GM13977 (cell line): ENCODE measurements at regions of chr7 and their contacts with region 1.

Region 1: GRCh38 chr7:148962823-148963582 is 65.3 kb downstream of the PDIA4 start:
- DNase-seq: peak; percentile 71
- CTCF ChIP-seq: peak; percentile 89

Region 2: GRCh38 chr7:148262721-148263229 is 700.2 kb before region 1 on chr7:
- in situ Hi-C with region 1: loop called (anchors 10 kb)
- DNase-seq: peak; percentile 64
- CTCF ChIP-seq: peak; percentile 99

Region 3: DNA sequence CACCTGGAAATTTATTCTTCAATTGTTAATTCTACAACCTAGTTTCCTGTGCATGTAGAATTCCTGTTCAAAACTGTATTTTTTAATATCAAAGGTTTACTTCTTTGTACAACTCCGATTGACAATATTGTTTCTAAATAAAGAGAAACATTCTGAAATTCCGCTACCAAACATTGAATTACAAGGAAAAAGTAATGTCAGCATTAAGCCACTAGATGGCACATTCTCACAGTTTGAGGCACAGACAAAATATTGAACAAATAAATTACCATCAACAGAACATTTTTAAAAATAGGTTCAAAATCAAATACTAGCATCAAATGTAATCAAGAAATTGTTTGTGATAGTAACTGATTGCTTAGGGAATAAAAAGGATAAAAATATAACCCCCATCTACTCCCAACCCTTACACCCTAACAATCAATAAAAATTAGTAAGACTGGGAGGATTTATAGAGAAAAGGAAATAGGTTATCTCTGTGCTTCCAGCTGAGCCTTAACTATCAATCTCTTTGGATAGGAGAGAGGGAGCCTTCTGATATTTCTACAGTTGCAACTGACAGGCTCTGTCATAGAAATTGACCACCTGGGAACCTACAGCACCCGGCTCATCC is 459.0 kb before region 1 on chr7:
- in situ Hi-C with region 1: loop called (anchors 10 kb)
- DNase-seq: no peak
- CTCF ChIP-seq: peak; percentile 77

Region 4: DNA sequence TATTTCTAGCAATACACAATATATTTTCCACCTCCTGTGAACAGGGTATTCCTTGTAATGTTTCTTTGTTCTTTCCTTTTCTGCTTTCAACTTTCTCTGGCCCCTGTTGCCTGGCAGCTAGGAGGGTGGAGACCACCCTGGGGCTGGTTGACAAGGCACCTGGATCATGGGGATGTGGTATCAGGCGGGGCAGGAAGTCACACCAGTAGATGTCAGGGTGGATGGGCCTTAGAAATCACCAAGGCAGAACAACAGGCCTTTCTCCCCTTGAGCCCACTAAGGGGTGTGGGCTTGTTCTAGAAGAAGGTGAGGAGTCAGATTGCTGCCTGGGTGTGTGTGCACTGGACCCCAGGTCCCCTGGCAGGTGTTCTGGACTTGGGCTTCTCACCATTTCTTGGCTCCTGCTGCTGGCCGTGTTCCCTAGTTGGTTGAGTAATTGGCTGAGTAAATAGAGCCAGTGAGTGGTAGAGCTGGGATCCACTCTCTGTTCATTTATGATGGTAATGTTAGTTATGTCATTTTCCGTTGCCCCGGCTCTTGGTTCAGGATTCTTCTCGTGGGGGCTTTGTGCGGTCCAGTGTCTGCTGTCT is 323.9 kb after region 1 on chr7:
- in situ Hi-C with region 1: no loop called
- DNase-seq: no peak
- CTCF ChIP-seq: no peak